ENCODE measurements at regions of chr7 and their contacts with region 1.

Region 1: GRCh38 chr7:74206589-74207120 is 3.2 kb upstream of the LAT2 start:
- DNase-seq: peak; percentile 84
- H3K4me3 Mint-ChIP-seq: no peak overlapping the region
- H3K27ac Mint-ChIP-seq: no peak overlapping the region
- H3K4me1 Mint-ChIP-seq: peaks cover 19% of the 10 kb centered on the region
- H3K27me3 Mint-ChIP-seq: peaks cover 4% of the 10 kb centered on the region

Region 2: DNA sequence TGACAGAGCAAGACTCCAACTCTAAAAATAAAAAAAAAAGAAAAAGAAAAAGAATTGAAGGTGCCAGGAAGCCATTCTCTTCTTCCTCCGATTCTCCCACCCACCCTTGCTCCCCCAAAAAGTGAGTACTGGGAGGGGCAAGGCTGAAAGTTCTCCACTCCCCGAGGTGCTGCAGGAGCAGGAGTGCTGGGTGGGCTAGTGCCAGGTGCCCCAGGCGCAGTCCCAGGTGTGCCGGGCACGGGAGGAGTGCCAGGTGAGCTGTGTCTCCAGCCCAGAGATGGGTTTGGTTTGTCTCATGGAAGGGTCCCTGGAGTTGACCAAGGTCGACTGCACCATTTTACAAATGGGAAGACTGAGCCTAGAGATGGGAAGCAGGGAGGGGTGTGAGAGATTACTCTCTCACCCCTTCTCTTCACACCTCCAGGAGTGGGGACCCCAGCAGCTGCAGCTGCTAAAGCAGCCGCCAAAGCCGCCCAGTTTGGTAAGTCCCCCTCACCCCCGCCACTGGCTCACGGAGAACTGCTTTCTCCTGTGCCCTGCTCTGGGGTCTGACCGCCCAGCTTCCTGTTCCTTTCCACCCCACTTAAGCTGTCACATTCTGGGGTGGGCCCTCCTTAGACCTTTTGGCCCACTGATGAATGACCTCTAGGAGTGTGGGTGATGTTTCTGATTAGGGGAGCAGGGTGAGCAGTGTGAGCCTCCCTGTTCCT is 149.3 kb before region 1 on chr7:
- CTCF ChIA-PET with region 1: no interaction called
- intact Hi-C with region 1: no loop called
- DNase-seq: no peak
- H3K4me3 Mint-ChIP-seq: no peak overlapping the region
- H3K27ac Mint-ChIP-seq: no peak overlapping the region
- H3K4me1 Mint-ChIP-seq: no peaks in the 10 kb centered on the region
- H3K27me3 Mint-ChIP-seq: peaks cover 5% of the 10 kb centered on the region

Region 3: DNA sequence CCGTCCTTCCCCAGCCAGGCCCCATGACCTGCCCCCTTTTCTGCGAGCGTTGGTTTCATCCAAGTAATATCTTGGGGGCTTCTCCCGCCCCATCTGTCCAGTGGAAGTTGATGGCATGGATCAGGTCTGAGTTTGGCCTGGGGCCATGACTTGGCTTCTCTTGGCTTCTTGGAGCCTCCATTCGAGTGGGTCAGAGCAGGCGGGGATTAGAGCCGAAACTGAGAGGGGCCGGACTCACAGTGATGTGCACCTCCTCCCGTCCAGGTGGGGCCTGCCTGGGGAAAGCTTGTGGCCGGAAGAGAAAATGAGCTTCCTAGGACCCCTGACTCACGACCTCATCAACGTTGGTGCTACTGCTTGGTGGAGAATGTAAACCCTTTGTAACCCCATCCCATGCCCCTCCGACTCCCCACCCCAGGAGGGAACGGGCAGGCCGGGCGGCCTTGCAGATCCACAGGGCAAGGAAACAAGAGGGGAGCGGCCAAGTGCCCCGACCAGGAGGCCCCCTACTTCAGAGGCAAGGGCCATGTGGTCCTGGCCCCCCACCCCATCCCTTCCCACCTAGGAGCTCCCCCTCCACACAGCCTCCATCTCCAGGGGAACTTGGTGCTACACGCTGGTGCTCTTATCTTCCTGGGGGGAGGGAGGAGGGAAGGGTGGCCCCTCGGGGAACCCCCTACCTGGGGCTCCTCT is 138.1 kb before region 1 on chr7:
- CTCF ChIA-PET with region 1: interaction called, 10 read pairs
- intact Hi-C with region 1: loop called (anchors 1 kb)
- DNase-seq: no peak
- H3K4me3 Mint-ChIP-seq: no peak overlapping the region
- H3K27ac Mint-ChIP-seq: no peak overlapping the region
- H3K4me1 Mint-ChIP-seq: no peaks in the 10 kb centered on the region
- H3K27me3 Mint-ChIP-seq: no peaks in the 10 kb centered on the region

Region 4: GRCh38 chr7:74183613-74184450 is 22.8 kb before region 1 on chr7:
- CTCF ChIA-PET with region 1: interaction called, 19 read pairs
- intact Hi-C with region 1: no loop called
- DNase-seq: peak; percentile 52
- H3K4me3 Mint-ChIP-seq: no peak overlapping the region
- H3K27ac Mint-ChIP-seq: peak overlapping the region; percentile 61
- H3K4me1 Mint-ChIP-seq: peaks cover 85% of the 10 kb centered on the region
- H3K27me3 Mint-ChIP-seq: no peaks in the 10 kb centered on the region

Region 5: DNA sequence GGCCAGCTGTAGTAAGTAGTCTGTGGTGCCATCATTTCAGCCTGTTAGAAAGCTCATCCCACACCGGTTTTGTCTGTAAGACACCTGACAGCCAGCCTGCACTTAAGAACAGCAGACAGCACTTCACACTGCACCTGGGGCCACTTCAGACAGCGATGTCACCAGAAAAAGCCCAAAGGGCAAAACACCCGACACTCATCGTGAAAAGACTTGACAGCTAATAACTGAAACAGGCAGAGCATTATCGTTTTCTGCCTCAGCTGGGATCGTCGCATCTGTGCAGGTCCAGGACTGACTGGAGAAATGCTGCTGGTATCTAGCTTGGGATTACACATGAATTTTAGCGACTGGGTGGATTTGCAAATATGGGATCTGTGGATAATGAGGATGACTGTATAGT is 13.6 kb before region 1 on chr7:
- CTCF ChIA-PET with region 1: interaction called, 19 read pairs
- intact Hi-C with region 1: no loop called
- DNase-seq: no peak
- H3K4me3 Mint-ChIP-seq: no peak overlapping the region
- H3K27ac Mint-ChIP-seq: no peak overlapping the region
- H3K4me1 Mint-ChIP-seq: peaks cover 7% of the 10 kb centered on the region
- H3K27me3 Mint-ChIP-seq: no peaks in the 10 kb centered on the region

Region 6: DNA sequence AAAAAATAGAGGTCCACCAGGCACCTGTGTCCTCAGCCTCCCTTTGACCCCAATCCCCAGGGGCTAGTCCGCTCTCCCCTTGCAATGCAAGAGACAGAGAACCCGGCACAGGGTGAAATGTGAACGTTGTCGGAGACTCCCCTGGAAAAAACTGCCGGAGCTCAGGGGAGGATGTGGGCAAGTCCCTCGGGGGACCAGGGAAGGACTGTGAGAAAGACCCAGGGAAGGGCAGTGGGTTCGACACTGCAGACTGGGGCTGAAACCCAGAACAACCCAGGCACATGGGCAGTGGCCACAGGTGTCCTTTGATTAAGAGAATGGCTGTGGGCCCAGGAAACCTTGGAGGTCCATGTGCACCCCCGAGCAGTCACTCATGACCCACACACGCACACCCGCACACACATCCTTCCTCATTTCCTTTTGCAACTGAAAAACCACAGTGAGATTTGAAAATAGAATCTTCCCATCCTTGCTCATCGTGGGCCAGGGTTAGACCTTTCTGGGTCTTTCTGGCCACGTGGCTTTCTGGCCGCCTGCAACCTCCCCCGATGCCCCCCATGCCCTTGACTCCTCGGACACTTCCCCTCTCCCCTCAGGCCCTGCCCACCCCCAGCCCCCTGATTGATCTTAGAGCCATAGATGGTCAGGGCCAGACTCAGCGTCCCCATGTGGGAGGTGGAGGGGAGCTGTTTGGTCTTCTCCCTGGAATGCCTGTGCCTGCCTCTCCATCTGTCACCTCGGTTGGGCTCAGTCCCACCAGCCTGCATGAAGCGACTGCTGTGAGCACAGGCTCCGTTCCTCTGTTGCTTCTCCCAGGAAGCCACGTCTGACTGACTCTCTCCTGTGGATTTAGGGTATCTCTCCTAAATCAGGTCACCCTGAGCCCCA is 11.0 kb after region 1 on chr7:
- CTCF ChIA-PET with region 1: interaction called, 20 read pairs
- intact Hi-C with region 1: no loop called
- DNase-seq: peak; percentile 31
- H3K4me3 Mint-ChIP-seq: no peak overlapping the region
- H3K27ac Mint-ChIP-seq: no peak overlapping the region
- H3K4me1 Mint-ChIP-seq: peaks cover 13% of the 10 kb centered on the region
- H3K27me3 Mint-ChIP-seq: no peaks in the 10 kb centered on the region

Region 7: GRCh38 chr7:74269757-74270277 is 63.2 kb after region 1 on chr7:
- CTCF ChIA-PET with region 1: interaction called, 5 read pairs
- intact Hi-C with region 1: loop called (anchors 5 kb)
- DNase-seq: peak; percentile 74
- H3K4me3 Mint-ChIP-seq: peak overlapping the region; percentile 73
- H3K27ac Mint-ChIP-seq: no peak overlapping the region
- H3K4me1 Mint-ChIP-seq: peaks cover 11% of the 10 kb centered on the region
- H3K27me3 Mint-ChIP-seq: peaks cover 5% of the 10 kb centered on the region